ENCODE measurements at regions of chr19 and their contacts with region 1.

Region 1: DNA sequence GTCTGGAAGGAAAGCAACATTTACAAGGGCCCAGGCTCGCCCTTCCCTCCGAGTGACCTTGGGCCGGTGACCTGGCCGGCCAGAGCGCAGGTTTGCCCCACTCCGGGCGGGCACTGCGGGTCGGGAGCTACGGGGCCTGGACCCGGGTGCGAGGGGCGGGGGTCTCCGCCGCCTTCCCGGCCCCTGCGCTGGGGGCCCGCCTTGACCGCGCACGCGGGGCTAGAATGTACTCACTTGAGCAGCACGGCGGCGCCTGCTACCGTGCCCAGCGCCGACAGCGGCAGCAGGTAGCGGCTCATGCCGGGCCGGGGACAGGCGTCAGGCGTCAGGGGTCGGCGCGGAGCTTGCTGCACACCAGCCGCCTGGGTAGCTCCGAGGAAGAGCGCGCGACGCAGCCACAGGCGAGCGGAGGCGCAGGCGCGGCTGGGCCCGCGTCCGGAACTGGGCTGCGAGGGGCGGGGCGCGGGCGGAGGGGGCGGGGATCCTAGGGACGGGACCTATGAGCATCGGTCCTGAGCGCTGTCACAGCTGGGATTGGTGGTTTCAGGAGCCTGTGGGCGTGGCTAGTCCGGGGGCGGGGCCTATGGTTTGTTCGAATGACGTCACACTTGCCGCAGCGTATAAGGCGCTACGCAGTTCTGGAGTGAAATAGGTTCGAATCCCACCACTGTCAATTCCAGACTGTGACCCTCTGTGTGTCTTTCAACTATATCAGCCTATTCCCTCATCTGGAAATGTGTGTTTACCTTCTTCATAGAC is at the start of gene RDH13:
- DNase-seq: peak; percentile 95 to 99 (median 97)
- ATAC-seq: peak; percentile 100
- H3K4me3 ChIP-seq: peak within 1 kb of the TSS; percentile 74
- H3K4me3 Mint-ChIP-seq: peak within 1 kb of the TSS; percentile 65 to 94 (median 86)
- H3K27ac ChIP-seq: peak within 1 kb of the TSS; percentile 78
- H3K27ac Mint-ChIP-seq: peak within 1 kb of the TSS; percentile 31 to 88 (median 77)
- H3K4me1 ChIP-seq: peaks cover 7 to 10% of the 10 kb centered on the region in 2 donors
- H3K4me1 Mint-ChIP-seq: peaks cover 0 to 33% (median 18%) of the 10 kb centered on the region in 7 donors
- H3K27me3 ChIP-seq: peaks cover 0 to 9% of the 10 kb centered on the region in 2 donors
- H3K27me3 Mint-ChIP-seq: peaks cover 19 to 36% (median 22%) of the 10 kb centered on the region in 5 donors
- total RNA-seq, gene RDH13: 14.5 to 24.8 (median 19.0) TPM

Region 2: GRCh38 chr19:54803410-54803809 is 259.5 kb before region 1 on chr19 and contains the start of gene KIR2DL4:
- CTCF ChIA-PET with region 1: no interaction called
- POLR2A ChIA-PET with region 1: no interaction called
- intact Hi-C with region 1: no loop called
- DNase-seq: no peak
- ATAC-seq: peak; percentile 66
- H3K4me3 ChIP-seq: no peak within 1 kb of the TSS
- H3K4me3 Mint-ChIP-seq: no peak within 1 kb of the TSS
- H3K27ac ChIP-seq: no peak within 1 kb of the TSS
- H3K27ac Mint-ChIP-seq: peak within 1 kb of the TSS in 1 of 9 donors; percentile 20
- H3K4me1 ChIP-seq: no peaks in the 10 kb centered on the region
- H3K4me1 Mint-ChIP-seq: peaks cover 0 to 16% (median 0%) of the 10 kb centered on the region in 7 donors
- H3K27me3 ChIP-seq: no peaks in the 10 kb centered on the region
- H3K27me3 Mint-ChIP-seq: peaks cover 4 to 34% (median 26%) of the 10 kb centered on the region in 5 donors
- total RNA-seq, gene KIR2DL4: 0.15 to 0.48 (median 0.44) TPM in 3 of 5 experiments, not detected in the others

Region 3: DNA sequence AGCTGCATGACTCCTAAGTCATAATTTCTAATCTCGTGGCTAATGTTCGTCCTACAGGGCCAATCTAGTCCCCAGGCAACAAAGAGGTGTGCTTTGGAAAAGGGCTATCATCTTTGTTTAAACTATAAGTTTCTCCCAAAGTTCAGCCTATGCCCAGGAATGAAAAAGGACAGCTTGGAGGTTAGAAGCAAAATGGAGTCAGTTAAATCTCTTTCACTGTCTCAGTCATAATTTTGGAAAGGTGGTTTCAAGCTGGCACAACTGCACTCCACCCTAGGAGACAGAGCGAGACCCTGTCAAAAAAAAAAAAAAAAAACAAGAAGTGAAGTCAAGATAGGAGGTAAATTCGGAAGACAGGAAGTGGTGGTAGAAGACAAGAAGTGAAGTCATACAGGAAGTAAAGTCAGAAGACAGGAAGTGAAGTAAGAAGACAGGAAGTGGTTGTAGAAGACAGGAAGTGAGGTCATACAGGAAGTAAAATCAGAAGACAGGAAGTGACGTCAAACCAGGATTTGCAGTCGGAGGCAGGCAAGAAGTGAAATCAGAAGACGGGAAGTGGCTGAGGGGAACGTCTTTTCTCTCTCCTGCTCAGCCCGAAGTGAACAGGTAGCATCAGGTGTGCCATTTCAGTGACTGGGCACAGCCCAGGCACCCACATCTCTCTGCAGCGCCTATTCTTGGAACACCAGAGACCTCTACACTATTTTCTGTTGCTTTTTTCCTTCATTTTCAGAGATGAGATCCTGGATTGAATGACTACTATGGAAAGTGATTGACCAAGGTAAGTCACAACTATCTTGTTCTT is 57.0 kb before region 1 on chr19:
- CTCF ChIA-PET with region 1: no interaction called
- POLR2A ChIA-PET with region 1: interaction called, 3 read pairs
- intact Hi-C with region 1: loop called (anchors 1 kb)
- DNase-seq: peak; percentile 26 to 92 (median 88)
- ATAC-seq: peak; percentile 92
- H3K4me3 ChIP-seq: peak overlapping the region; percentile 51
- H3K4me3 Mint-ChIP-seq: peak overlapping the region; percentile 75 to 92 (median 84)
- H3K27ac ChIP-seq: peak overlapping the region; percentile 75
- H3K27ac Mint-ChIP-seq: peak overlapping the region; percentile 86 to 98 (median 92)
- H3K4me1 ChIP-seq: peaks cover 0 to 8% of the 10 kb centered on the region in 2 donors
- H3K4me1 Mint-ChIP-seq: peaks cover 26 to 47% (median 40%) of the 10 kb centered on the region in 7 donors
- H3K27me3 ChIP-seq: peaks cover 0 to 3% of the 10 kb centered on the region in 2 donors
- H3K27me3 Mint-ChIP-seq: peaks cover 3 to 41% (median 35%) of the 10 kb centered on the region in 5 donors

Region 4: GRCh38 chr19:55041617-55042349 is 21.1 kb before region 1 on chr19:
- CTCF ChIA-PET with region 1: no interaction called
- POLR2A ChIA-PET with region 1: no interaction called
- intact Hi-C with region 1: loop called (anchors 1 to 2 kb)
- DNase-seq: peak in 7 of 9 donors; percentile 10 to 44 (median 29)
- ATAC-seq: peak; percentile 56
- H3K4me3 ChIP-seq: peak overlapping the region; percentile 39
- H3K4me3 Mint-ChIP-seq: peak overlapping the region; percentile 66 to 87 (median 82)
- H3K27ac ChIP-seq: peak overlapping the region; percentile 31
- H3K27ac Mint-ChIP-seq: peak overlapping the region in 8 of 9 donors; percentile 46 to 93 (median 81)
- H3K4me1 ChIP-seq: peaks cover 11 to 19% of the 10 kb centered on the region in 2 donors
- H3K4me1 Mint-ChIP-seq: peaks cover 16 to 34% (median 26%) of the 10 kb centered on the region in 7 donors
- H3K27me3 ChIP-seq: no peaks in the 10 kb centered on the region
- H3K27me3 Mint-ChIP-seq: no peaks in the 10 kb centered on the region

Region 5: GRCh38 chr19:55080968-55081772 is 18.3 kb after region 1 on chr19:
- CTCF ChIA-PET with region 1: no interaction called
- POLR2A ChIA-PET with region 1: interaction called, 4 read pairs
- intact Hi-C with region 1: loop called (anchors 1 kb)
- DNase-seq: peak; percentile 70 to 96 (median 79)
- ATAC-seq: peak; percentile 93
- H3K4me3 ChIP-seq: peak overlapping the region; percentile 53
- H3K4me3 Mint-ChIP-seq: peak overlapping the region; percentile 78 to 92 (median 86)
- H3K27ac ChIP-seq: peak overlapping the region; percentile 2
- H3K27ac Mint-ChIP-seq: peak overlapping the region in 6 of 9 donors; percentile 56 to 96 (median 66)
- H3K4me1 ChIP-seq: peaks cover 10 to 15% of the 10 kb centered on the region in 2 donors
- H3K4me1 Mint-ChIP-seq: peaks cover 12 to 30% (median 20%) of the 10 kb centered on the region in 7 donors
- H3K27me3 ChIP-seq: peaks cover 0 to 12% of the 10 kb centered on the region in 2 donors
- H3K27me3 Mint-ChIP-seq: peaks cover 38 to 47% (median 46%) of the 10 kb centered on the region in 5 donors

Region 6: GRCh38 chr19:55088543-55089341 is 25.8 kb after region 1 on chr19:
- CTCF ChIA-PET with region 1: interaction called, 4 read pairs
- POLR2A ChIA-PET with region 1: interaction called, 3 read pairs
- intact Hi-C with region 1: loop called in 1 of 2 experiments (anchors 2 kb)
- DNase-seq: peak; percentile 33 to 85 (median 60)
- ATAC-seq: peak; percentile 73
- H3K4me3 ChIP-seq: no peak overlapping the region
- H3K4me3 Mint-ChIP-seq: peak overlapping the region; percentile 40 to 84 (median 73)
- H3K27ac ChIP-seq: no peak overlapping the region
- H3K27ac Mint-ChIP-seq: peak overlapping the region in 1 of 9 donors; percentile 17
- H3K4me1 ChIP-seq: peaks cover 12 to 19% of the 10 kb centered on the region in 2 donors
- H3K4me1 Mint-ChIP-seq: peaks cover 19 to 30% (median 22%) of the 10 kb centered on the region in 7 donors
- H3K27me3 ChIP-seq: peaks cover 0 to 8% of the 10 kb centered on the region in 2 donors
- H3K27me3 Mint-ChIP-seq: peaks cover 35 to 50% (median 44%) of the 10 kb centered on the region in 5 donors

Region 7: GRCh38 chr19:55279770-55280643 is 217.1 kb after region 1 on chr19 and contains the start of gene HSPBP1:
- CTCF ChIA-PET with region 1: no interaction called
- POLR2A ChIA-PET with region 1: no interaction called
- intact Hi-C with region 1: loop called in 1 of 2 experiments (anchors 1 kb)
- DNase-seq: peak; percentile 88 to 96 (median 96)
- ATAC-seq: peak; percentile 92
- H3K4me3 ChIP-seq: peak within 1 kb of the TSS; percentile 91
- H3K4me3 Mint-ChIP-seq: peak within 1 kb of the TSS; percentile 92 to 100 (median 98)
- H3K27ac ChIP-seq: peak within 1 kb of the TSS; percentile 89
- H3K27ac Mint-ChIP-seq: peak within 1 kb of the TSS; percentile 91 to 100 (median 98)
- H3K4me1 ChIP-seq: peaks cover 6 to 32% of the 10 kb centered on the region in 2 donors
- H3K4me1 Mint-ChIP-seq: peaks cover 12 to 52% (median 39%) of the 10 kb centered on the region in 7 donors
- H3K27me3 ChIP-seq: no peaks in the 10 kb centered on the region
- H3K27me3 Mint-ChIP-seq: peaks cover 0 to 9% (median 0%) of the 10 kb centered on the region in 5 donors
- total RNA-seq, gene HSPBP1: 15.0 to 30.0 (median 16.0) TPM

Region 8: DNA sequence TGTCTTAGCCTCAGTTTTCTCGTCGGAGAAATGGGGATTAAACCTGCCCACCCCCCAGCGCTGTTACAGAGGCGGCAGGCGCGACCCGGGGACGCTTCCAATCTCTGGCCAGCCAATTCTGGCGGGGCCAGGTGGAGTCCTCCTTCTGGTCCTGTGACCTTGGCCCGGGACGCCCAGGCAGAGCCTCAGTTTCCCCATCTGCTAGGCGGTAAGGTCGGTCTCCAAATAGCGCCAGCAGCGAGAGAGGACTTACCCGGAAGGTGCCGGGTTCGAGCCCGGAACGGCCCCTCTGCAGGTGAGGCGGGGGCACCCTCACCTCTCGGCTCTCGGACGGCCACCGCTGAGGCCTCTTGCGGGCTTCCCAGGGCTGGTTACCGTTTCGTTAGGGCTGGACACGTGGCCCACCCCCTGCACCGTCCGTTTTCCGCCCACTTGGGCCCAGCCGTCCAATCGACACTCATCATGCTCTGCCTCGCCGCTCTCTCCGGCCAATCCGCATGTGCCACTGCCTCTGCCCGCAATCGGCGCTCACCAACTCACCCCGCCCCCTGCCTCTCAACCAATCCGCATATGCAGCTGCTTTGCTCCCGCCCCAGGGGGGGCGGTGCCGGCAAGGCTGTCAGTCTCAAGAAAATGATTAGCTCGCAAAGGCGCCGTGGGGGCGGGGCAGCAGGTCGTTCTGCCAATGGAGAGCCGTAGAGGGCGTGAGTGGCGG is 398.5 kb after region 1 on chr19 and contains the start of gene ISOC2:
- CTCF ChIA-PET with region 1: no interaction called
- POLR2A ChIA-PET with region 1: no interaction called
- intact Hi-C with region 1: loop called in 1 of 2 experiments (anchors 1 kb)
- DNase-seq: peak; percentile 99 to 100 (median 100)
- ATAC-seq: peak; percentile 98
- H3K4me3 ChIP-seq: peak within 1 kb of the TSS; percentile 91
- H3K4me3 Mint-ChIP-seq: peak within 1 kb of the TSS; percentile 86 to 99 (median 92)
- H3K27ac ChIP-seq: peak within 1 kb of the TSS; percentile 79
- H3K27ac Mint-ChIP-seq: peak within 1 kb of the TSS; percentile 68 to 94 (median 90)
- H3K4me1 ChIP-seq: peaks cover 4 to 12% of the 10 kb centered on the region in 2 donors
- H3K4me1 Mint-ChIP-seq: peaks cover 14 to 33% (median 20%) of the 10 kb centered on the region in 7 donors
- H3K27me3 ChIP-seq: no peaks in the 10 kb centered on the region
- H3K27me3 Mint-ChIP-seq: peaks cover 0 to 2% (median 0%) of the 10 kb centered on the region in 5 donors
- total RNA-seq, gene ISOC2: 5.1 to 20.1 (median 11.3) TPM

Region 9: GRCh38 chr19:55508120-55508519 is 445.2 kb after region 1 on chr19:
- CTCF ChIA-PET with region 1: no interaction called
- POLR2A ChIA-PET with region 1: no interaction called
- intact Hi-C with region 1: no loop called
- DNase-seq: no peak
- ATAC-seq: no peak
- H3K4me3 ChIP-seq: no peak overlapping the region
- H3K4me3 Mint-ChIP-seq: no peak overlapping the region
- H3K27ac ChIP-seq: no peak overlapping the region
- H3K27ac Mint-ChIP-seq: peak overlapping the region in 1 of 9 donors; percentile 6
- H3K4me1 ChIP-seq: peaks cover 4% of the 10 kb centered on the region in 2 donors
- H3K4me1 Mint-ChIP-seq: peaks cover 0 to 12% (median 9%) of the 10 kb centered on the region in 7 donors
- H3K27me3 ChIP-seq: no peaks in the 10 kb centered on the region
- H3K27me3 Mint-ChIP-seq: peaks cover 0 to 21% (median 14%) of the 10 kb centered on the region in 5 donors

Measured in naive thymus-derived CD4-positive, alpha-beta T cell (primary cell).